ENCODE measurements at regions of chr3 and their contacts with region 1.

Region 1: GRCh38 chr3:129026728-129027543 is 25.8 kb downstream of the EFCC1 start:
- DNase-seq: peak; percentile 96
- H3K4me3 Mint-ChIP-seq: peak overlapping the region; percentile 73
- H3K27ac Mint-ChIP-seq: peak overlapping the region; percentile 83
- H3K4me1 Mint-ChIP-seq: peaks cover 9% of the 10 kb centered on the region
- H3K27me3 Mint-ChIP-seq: no peaks in the 10 kb centered on the region

Region 2: DNA sequence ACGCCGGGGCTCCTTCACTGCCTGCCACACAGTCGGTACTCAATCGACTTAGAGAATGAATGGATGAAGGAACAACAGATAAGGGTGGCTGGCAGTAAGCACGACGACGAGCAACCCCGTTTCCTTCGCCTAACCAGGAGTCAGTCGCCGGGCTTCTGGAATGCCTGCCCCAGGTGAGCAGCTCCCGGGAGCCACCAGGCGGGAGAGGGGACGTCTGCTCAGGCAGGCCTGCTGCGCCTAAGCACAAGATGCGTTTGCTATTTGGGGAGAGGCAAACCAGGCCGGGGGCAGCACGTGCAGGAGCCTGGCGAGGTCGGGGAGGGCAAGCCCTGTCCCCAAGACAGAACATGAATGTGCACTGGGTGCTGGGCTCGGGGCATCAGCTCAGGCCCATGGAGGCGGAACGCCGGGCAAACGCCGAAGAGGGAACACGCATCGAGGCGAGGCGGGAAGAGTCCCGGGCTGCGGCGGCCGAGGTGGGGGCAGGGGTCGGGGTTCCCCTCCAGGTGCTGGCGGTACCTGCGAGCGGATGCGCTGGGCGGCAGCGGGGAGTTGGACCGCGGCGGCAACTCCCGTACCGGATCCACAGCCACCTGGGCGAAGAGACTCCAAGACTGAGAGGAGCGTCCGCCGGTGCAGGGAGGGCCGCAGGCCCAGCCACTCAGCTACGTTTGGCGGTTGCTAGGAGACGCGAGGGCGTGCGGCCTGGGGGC is 33.3 kb before region 1 on chr3 and contains the start of gene CFAP92:
- CTCF ChIA-PET with region 1: interaction called, 12 read pairs
- POLR2A ChIA-PET with region 1: no interaction called
- intact Hi-C with region 1: no loop called
- DNase-seq: peak; percentile 95
- H3K4me3 Mint-ChIP-seq: peak within 1 kb of the TSS; percentile 57
- H3K27ac Mint-ChIP-seq: no peak within 1 kb of the TSS
- H3K4me1 Mint-ChIP-seq: peaks cover 21% of the 10 kb centered on the region
- H3K27me3 Mint-ChIP-seq: no peaks in the 10 kb centered on the region
- total RNA-seq, gene CFAP92: 0.24 TPM in 1 of 2 experiments, not detected in the other

Region 3: DNA sequence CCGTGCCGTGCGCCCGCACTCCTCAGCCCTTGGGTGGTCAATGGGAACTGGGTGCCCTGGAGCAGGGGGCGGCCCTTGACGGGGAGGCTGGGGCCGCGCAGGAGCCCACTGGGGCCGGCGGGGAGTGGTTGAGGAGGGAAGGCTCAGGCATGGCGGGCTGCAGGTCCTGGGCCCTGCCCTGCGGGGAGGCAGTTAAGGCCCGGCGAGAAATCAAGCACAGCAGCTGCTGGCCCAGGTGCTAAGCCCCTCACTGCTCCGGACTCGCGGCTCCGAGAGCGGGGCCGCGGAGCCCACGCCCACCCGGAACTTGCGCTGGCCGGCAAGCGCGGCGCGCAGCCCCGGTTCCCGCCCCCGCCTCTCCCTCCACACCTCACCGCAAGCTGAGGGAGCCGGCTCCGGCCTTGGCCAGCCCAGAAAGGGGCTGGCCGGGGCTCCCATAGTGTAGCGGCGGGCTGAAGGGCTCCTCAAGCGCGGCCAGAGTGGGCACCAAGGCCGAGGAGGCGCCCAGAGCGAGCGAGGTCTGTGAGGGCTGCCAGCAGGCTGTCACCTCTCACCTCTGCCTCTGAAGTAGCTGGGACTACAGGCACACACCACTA is 41.5 kb after region 1 on chr3:
- CTCF ChIA-PET with region 1: interaction called, 14 read pairs
- POLR2A ChIA-PET with region 1: no interaction called
- intact Hi-C with region 1: no loop called
- DNase-seq: peak; percentile 30
- H3K4me3 Mint-ChIP-seq: peak overlapping the region; percentile 29
- H3K27ac Mint-ChIP-seq: no peak overlapping the region
- H3K4me1 Mint-ChIP-seq: peaks cover 7% of the 10 kb centered on the region
- H3K27me3 Mint-ChIP-seq: peaks cover 5% of the 10 kb centered on the region

Region 4: DNA sequence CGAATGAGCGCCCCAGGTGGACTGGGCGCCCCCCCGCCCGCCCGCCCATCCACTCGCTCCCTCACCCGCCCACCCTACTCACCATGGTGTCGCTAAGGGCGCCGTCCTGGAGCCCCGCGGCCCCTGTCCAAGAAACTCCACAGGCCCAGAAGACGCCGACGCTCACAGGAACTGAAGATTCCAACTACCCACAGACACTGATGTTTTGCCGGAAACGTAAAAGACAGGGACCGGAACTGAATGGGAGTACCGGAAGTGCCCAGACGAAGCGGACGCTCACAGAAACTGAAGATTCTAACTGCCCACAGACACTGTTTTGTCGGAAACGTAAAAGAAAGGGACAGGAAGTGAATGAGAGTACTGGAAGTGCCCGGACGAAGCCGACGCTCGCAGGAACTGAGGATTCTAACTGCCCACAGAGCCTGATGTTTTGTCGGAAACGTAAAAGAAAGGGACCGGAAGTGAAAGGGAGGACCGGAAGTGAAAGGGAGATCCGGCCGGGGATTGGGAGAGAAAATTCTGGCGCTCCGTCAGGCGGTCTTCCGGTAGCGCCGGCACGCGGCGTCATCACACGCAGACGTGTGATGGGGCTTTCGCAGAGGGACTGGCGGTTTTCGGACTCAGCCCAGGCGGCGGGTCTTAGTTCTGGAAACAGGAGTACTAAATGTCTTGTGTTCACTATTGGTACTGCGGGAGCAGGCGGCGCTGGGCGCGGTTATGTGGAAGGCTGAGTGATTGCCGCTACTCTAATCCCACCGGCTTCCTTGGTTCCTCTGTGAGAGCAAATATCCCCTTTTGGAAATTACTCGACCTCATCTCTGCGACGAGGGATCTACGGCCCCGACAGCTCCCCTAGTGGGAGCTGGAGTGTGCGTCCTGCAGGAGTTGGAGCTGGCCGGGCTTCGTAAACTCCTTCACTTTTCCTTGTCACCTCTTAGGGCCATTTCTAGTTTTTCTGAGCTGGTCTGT is 134.2 kb after region 1 on chr3 and contains the start of gene ISY1:
- CTCF ChIA-PET with region 1: interaction called, 17 read pairs
- POLR2A ChIA-PET with region 1: no interaction called
- intact Hi-C with region 1: no loop called
- DNase-seq: peak; percentile 93
- H3K4me3 Mint-ChIP-seq: peak within 1 kb of the TSS; percentile 98
- H3K27ac Mint-ChIP-seq: peak within 1 kb of the TSS; percentile 100
- H3K4me1 Mint-ChIP-seq: peaks cover 31% of the 10 kb centered on the region
- H3K27me3 Mint-ChIP-seq: no peaks in the 10 kb centered on the region
- total RNA-seq, gene ISY1: 60.7 to 61.7 TPM